OCI-LY7 (cell line): ENCODE measurements at regions of chr1 and their contacts with region 1.

Region 1: DNA sequence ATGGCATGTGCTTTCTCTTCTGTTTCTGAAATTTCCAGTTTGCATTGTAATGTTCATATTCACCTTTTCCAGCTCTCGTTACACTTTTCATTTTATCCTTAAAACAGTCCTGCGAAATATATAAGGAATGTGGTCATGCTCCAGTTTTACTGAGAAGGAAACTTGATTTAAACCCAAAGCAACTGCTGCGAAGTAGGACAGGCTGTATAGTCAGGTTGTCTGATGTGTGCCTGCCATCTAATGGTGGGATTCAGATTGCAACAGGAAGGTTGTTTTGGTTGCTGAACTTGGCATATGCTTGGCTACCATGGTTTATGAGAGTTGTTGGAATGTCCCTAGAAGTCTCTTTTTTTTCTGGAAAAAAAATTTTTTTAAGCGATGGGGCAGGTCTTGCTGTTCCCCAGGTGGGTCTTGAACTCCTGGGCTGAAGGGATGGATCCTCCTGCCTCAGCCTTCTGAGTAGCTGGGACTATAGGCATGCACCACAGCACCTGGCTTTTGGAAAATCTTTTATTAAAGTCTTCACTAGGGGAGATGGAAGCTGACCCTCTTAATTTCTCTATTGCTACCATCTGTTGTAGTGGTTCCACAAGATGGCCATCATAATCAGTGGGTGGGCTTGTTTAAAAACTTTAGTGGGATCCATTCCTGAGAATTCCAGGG is 86.9 kb downstream of the UCK2 start:
- DNase-seq: peak; percentile 73
- H3K4me3 ChIP-seq: no peak overlapping the region
- H3K27ac ChIP-seq: no peak overlapping the region
- H3K4me1 ChIP-seq: peaks cover 7% of the 10 kb centered on the region
- CTCF ChIP-seq: peak; percentile 96

Region 2: DNA sequence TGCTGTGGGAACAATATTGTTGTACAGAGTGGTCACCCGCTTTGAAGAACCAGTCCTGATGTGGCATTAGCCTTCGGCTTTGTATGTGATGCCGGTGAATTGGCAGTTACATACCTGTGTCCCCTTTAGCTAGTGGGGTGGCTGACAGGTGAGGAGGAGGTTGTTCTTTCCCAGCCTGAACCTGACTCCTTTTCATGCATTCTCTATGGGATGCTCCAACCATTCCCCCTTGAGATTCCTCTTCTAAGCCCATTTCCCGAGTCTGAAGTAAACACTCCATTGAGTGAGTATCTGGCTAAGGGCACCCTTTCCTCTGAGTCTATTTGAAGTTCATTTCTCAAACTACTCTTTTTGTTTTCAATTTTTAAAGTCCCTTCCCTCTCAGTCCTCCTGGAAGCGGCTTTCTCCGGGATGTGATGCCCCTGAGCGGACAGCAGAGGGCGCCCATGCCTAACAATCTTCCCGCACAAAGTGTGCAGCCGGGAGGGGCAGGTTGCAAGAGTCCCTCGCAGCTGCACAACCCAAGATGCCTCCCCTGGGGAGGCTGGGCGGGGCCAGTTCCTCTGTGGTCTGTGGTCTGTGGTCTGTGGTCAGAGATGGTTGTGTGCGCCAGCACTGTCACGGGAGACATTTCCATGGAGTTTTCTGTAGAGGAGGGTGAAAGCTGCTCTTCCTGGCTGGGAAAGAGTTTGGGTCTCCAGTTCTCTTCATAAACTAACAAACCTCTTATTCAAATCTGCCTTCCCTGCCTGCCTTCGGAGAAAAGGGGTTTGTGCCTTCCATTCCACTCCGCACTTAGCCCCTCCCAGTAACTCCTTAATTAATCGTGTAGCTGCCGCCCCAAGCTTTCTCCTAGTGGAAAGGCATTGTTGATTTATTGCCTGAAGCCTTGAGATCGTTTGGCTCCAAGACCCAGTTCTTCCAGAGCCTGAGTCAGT is 521.4 kb before region 1 on chr1:
- CTCF ChIA-PET with region 1: no interaction called
- POLR2A ChIA-PET with region 1: no interaction called
- intact Hi-C with region 1: loop called (anchors 5 kb)
- DNase-seq: peak; percentile 89
- H3K4me3 ChIP-seq: no peak overlapping the region
- H3K27ac ChIP-seq: no peak overlapping the region
- H3K4me1 ChIP-seq: peaks cover 6% of the 10 kb centered on the region
- CTCF ChIP-seq: peak; percentile 95

Region 3: DNA sequence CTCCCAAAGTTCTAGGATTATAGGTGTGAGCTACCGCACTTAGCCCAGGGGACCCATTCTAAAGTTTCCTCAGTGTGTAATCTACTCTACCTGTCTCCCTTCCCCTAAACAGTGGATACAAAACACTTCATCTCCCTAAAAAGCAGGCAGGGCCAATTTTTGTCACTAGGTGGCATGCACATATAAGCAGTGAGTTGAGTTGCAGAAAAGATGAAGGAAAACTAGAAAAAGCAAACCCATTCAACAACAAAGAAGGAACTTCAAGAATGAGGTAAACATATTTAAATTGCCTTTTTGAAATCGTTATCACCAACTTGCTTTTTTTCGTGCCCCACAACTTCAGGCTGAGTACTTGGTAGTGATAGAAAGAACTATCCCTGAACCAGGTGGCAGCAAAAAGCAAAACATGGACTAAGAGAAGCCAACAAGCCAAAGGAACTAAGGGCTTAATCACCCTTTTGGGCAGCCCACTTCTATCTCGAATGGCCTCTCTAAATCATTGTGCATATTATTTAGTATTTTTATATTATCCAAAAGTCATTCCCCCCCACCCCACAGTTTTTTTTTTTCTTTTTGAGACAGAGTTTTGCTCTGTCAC is 196.2 kb before region 1 on chr1:
- CTCF ChIA-PET with region 1: no interaction called
- POLR2A ChIA-PET with region 1: no interaction called
- intact Hi-C with region 1: loop called (anchors 1 kb)
- DNase-seq: peak; percentile 74
- H3K4me3 ChIP-seq: no peak overlapping the region
- H3K27ac ChIP-seq: no peak overlapping the region
- H3K4me1 ChIP-seq: no peaks in the 10 kb centered on the region
- CTCF ChIP-seq: peak; percentile 92